PC-9 (cell line): ENCODE measurements at regions of chr20 and their contacts with region 1.

Region 1: DNA sequence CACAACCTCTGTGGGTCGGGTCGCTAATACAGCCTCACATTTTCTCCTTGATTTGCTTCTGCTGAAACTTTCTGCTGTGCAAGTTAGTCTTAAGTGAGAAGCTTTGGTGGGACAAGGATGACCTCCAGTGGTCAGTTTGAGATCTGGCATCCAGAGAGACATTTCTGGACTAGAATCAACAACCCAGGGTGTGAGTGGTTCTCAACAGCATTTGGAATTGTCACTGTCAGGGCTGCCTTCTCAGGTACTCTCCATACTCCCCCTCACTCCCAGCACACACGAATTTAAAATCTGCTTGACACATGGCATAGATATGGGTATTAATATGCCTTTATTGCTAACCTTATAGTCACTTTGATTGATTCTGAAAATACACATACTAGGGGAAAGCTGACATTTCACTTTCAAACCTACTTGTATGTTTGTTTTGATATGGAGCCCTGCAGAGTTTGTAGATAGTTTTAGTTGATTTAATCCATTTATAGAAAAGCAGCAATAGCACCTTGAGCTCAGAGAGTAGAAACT is 13.2 kb downstream of the OTOR start:
- DNase-seq: peak; percentile 53 to 72
- H3K4me3 ChIP-seq: peak overlapping the region; percentile 28; the same call in 1 of the 2 replicates
- H3K27ac ChIP-seq: peak overlapping the region; percentile 62
- H3K4me1 ChIP-seq: peaks cover 25% of the 10 kb centered on the region
- H3K27me3 ChIP-seq: no peaks in the 10 kb centered on the region; the same call in 1 of the 2 replicates
- CTCF ChIP-seq: peak; percentile 88

Region 2: DNA sequence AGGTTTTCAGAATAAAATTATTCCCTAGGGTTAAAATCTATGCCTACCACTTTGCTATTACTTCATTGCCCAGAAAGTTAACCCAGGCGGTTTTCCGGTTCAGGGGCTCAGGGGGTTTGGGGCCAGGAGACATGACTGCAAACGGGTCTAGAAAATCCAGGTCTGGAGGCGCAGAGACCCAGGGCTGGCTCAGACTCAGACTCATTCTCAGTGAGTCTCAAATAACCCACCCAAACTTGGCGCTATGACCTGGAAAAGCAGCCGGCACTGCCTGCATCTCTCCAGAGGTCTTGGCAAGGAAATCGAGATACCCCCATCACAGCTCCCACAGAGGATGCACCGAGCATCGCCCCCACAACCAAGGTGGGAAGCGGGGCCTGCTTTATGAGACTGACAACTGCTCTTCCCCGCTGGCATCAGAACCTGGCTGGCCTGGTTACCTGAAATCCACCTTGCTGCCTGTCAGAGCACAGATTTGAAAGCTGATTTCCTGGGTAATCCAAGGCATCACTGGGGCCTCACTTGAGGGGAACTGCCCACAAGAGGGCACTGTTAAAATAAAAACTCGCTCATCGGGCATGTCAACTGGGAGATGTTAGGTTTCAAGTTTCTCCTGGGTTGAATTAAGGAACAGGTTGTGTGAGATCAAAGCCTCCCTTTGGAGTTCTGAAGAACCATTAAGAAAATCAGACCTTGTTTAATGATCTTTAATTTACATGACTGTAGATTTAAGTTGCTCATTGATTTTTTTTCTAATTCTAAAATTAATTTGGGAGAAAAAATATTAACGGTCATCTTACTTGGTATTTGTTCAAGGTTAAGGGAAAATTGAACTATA is 243.2 kb before region 1 on chr20:
- CTCF ChIA-PET with region 1: no interaction called
- POLR2A ChIA-PET with region 1: no interaction called
- intact Hi-C with region 1: loop called (anchors 1 kb)
- DNase-seq: peak; percentile 53 to 61
- H3K4me3 ChIP-seq: no peak overlapping the region
- H3K27ac ChIP-seq: no peak overlapping the region
- H3K4me1 ChIP-seq: no peaks in the 10 kb centered on the region
- H3K27me3 ChIP-seq: no peaks in the 10 kb centered on the region
- CTCF ChIP-seq: peak; percentile 82

Region 3: GRCh38 chr20:16639027-16639941 is 122.1 kb before region 1 on chr20:
- CTCF ChIA-PET with region 1: no interaction called
- POLR2A ChIA-PET with region 1: no interaction called
- intact Hi-C with region 1: loop called (anchors 5 kb)
- DNase-seq: no peak
- H3K4me3 ChIP-seq: no peak overlapping the region
- H3K27ac ChIP-seq: no peak overlapping the region
- H3K4me1 ChIP-seq: no peaks in the 10 kb centered on the region
- H3K27me3 ChIP-seq: peaks cover 22% of the 10 kb centered on the region
- CTCF ChIP-seq: no peak

Region 4: GRCh38 chr20:16701296-16701695 is 60.1 kb before region 1 on chr20:
- CTCF ChIA-PET with region 1: no interaction called
- POLR2A ChIA-PET with region 1: no interaction called
- intact Hi-C with region 1: loop called (anchors 2 kb)
- DNase-seq: no peak
- H3K4me3 ChIP-seq: no peak overlapping the region
- H3K27ac ChIP-seq: no peak overlapping the region
- H3K4me1 ChIP-seq: no peaks in the 10 kb centered on the region
- H3K27me3 ChIP-seq: no peaks in the 10 kb centered on the region
- CTCF ChIP-seq: peak; percentile 43; the same call in 1 of the 2 replicates

Region 5: DNA sequence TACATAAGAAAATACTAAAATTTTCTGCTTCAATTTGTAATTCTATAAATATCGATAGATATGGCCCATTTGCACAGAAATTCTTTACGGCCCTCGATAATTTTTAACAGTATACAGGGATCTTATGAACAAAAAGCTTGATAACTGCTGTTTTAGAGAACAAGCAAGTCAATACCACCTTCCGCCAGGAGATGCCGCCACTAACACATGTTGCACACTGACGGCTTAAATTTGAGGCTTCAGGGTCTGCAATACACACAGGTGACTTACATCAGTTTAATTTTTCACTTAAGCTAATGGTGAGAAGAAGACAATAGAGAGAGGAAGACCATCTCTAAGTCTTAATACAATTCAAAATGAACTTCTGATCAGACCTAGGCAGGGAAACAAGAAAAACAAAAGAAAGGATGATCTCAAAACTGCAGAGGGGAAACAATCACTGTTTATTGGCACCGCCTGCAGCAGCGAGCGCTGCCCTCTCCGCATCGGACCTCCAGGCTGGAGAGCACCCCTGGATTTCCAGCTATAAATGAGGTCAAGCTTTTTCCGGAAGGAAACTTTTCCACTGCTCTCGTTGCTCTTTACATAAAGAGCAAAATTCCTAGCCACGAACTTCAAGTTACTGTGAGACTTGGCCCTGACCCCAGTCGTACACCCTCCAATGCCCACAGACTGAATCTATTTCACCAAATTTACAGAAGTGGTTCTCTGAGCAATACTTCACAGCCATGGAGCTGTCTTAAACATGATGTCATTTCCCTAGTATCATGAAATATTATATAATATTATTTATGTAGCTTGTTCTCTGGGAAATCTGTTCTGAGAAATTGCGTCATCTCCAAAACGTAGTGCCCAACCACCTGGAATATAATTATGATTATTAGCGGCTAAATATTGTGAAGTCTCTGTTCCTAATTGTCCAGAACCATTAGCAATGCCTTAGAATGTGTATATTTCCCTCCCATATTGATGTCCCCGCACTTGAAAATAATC is 40.8 kb after region 1 on chr20:
- CTCF ChIA-PET with region 1: no interaction called
- POLR2A ChIA-PET with region 1: no interaction called
- intact Hi-C with region 1: no loop called
- DNase-seq: peak in 1 of 2 experiments; percentile 64
- H3K4me3 ChIP-seq: no peak overlapping the region
- H3K27ac ChIP-seq: no peak overlapping the region
- H3K4me1 ChIP-seq: no peaks in the 10 kb centered on the region
- H3K27me3 ChIP-seq: peaks cover 82% of the 10 kb centered on the region
- CTCF ChIP-seq: peak; percentile 88